Gastrocnemius medialis (tissue), 4 donors: ENCODE measurements at regions of chr14 and their contacts with region 1.

Region 1: DNA sequence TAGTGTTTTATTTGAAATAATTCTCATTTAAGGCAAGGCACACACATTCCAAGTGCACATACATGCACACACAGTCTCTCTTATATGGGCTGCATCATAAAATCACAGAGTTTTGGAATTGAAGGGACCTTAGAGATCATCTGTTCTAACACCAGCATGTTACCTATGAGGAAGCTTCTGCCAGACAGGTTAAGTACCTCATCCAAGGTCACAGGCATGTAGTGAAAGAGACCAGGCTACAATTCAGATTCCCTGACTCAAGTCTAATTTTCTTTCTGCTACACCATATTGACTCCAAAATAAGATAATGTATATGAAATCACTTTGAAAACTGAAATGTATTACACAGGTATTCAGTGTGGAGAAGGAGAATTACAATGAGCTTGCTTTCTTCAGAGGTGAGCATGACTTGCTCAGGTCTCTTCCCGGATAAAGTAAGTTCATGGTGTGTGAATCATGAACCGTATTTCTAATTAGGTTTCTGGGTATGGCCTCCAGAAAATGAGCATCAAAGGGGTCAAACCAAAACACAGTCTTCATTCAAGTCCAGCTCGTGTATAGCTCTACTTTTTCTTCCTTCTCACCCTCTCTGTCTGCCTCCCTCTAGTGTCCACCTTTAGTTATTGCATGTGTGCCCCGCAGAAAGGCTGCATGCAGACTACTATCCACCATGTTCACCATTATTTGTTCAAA is 411.9 kb downstream of the FUT8 start:
- DNase-seq: peak; percentile 10 to 39
- ATAC-seq: peak; percentile 84 to 88
- H3K4me3 ChIP-seq: no peak overlapping the region
- H3K27ac ChIP-seq: no peak overlapping the region
- H3K4me1 ChIP-seq: no peaks in the 10 kb centered on the region
- H3K27me3 ChIP-seq: no peaks in the 10 kb centered on the region
- CTCF ChIP-seq: peak; percentile 56 to 91 (median 78)
- POLR2A ChIP-seq: no peak

Region 2: GRCh38 chr14:65169351-65169750 is 655.1 kb before region 1 on chr14:
- in situ Hi-C with region 1: loop called (anchors 5 to 25 kb)
- intact Hi-C with region 1: loop called (anchors 1 kb)
- DNase-seq: no peak
- ATAC-seq: peak; percentile 54 to 64
- H3K4me3 ChIP-seq: no peak overlapping the region
- H3K27ac ChIP-seq: peak overlapping the region; percentile 21 to 65 (median 56)
- H3K4me1 ChIP-seq: peaks cover 4 to 5% of the 10 kb centered on the region in 2 donors
- H3K27me3 ChIP-seq: peaks cover 8 to 13% (median 10%) of the 10 kb centered on the region in 3 donors
- CTCF ChIP-seq: no peak
- POLR2A ChIP-seq: no peak

Region 3: DNA sequence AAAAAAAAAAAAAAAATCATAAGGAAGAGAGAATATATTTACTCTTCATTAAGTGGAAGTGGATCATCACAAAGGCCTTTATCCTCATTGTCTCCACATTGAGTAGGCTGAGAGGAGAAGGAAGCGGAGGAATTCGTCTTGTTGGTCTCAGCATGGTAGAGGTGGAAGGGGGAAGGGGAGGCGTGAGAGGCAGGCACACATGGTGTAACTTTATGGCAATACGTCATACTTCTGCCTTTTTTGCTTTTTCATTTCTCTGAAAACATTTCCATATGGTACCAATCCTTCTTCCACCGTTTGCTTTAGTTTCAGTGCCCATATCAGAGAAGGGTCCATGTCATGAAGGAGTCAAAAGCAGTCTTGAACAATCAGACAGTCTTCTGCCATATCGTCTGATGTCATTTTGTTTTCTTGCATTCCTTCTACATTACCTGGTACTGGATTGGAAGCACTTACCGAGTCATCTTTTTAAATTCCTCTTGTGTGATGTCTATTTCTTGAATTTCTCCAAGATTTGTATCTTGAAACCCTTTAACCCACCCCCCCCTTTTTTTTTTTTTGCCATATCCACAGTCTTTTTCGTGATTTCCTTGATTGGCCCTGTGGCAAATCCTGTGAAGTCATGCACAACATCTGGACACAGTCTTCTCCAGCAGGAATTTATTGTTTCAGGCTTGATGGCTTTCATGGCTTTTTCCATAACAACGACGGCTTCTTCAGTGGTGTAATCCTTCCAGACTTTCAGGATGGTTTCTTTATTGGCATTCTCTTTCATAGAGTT is 403.0 kb before region 1 on chr14:
- in situ Hi-C with region 1: loop called (anchors 10 kb)
- intact Hi-C with region 1: no loop called
- DNase-seq: no peak
- ATAC-seq: no peak
- H3K4me3 ChIP-seq: no peak overlapping the region
- H3K27ac ChIP-seq: no peak overlapping the region
- H3K4me1 ChIP-seq: no peaks in the 10 kb centered on the region
- H3K27me3 ChIP-seq: no peaks in the 10 kb centered on the region
- CTCF ChIP-seq: no peak
- POLR2A ChIP-seq: no peak

Region 4: DNA sequence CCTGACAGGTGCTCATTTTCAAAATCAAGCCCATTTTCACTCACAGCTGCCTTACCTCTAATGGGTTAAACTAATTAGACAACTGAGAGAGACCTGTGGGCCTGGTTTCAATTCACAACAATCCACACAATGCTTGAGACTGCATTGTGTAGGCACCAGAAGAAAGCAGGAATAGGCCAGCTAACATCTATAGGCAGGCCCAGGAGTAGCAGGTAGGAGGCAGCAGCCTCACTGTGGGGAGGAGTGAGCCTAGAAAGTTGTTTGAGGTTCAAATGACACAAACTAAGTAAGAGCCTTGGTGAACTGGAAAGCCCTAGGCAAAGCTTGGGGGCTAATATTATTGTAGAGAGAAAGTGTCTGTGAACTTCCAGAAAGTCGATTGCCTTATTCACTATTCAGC is 372.2 kb after region 1 on chr14:
- in situ Hi-C with region 1: no loop called
- intact Hi-C with region 1: no loop called
- DNase-seq: no peak
- ATAC-seq: no peak
- H3K4me3 ChIP-seq: no peak overlapping the region
- H3K27ac ChIP-seq: no peak overlapping the region
- H3K4me1 ChIP-seq: no peaks in the 10 kb centered on the region
- H3K27me3 ChIP-seq: no peaks in the 10 kb centered on the region
- CTCF ChIP-seq: no peak
- POLR2A ChIP-seq: no peak